Activated naive CD4-positive, alpha-beta T cell treated with anti-CD3 and anti-CD28 coated beads, Interleukin-2, amount 10 ng/mL, durations not matched to agents 7 days and 5 days (primary cell): ENCODE measurements at regions of chr1 and their contacts with region 1.

Region 1: DNA sequence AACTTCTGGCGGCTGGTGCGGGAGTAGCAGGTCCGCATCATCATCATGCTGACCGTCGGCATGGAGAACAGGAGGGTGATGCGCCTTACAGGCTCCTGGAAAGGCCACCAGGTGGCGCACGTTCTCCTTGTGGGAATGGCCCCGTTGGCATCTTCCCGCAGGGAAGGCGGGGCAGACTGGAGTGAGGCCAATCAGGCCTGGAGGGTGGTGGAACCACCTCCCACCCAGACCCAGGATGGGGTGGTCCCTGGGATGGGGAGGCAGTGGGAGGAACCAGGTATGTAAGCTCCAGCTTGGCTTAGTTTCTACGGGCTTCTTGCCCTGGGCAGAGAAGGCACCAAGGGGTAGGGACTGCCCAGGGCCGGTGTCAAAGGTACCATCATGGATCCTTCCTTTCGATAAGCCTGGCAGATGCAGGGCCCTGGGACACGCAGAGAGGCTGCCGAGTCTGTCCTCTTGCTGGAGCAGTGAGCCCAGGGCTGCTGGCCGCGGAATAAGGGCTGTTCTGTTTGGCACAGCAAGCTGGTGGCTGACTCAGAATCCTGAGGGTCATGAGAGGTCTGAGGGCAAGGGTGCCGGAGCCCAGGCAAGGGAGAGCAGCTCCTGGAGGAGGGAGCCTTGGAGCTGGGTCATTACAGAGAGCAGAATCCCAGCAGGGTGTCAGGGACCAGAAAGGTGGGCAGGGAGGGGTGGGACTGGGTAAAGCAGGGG is 8.7 kb upstream of the LGR6 start:
- DNase-seq: peak; percentile 79
- H3K4me3 Mint-ChIP-seq: no peak overlapping the region
- H3K27ac Mint-ChIP-seq: no peak overlapping the region
- H3K4me1 Mint-ChIP-seq: peaks cover 10% of the 10 kb centered on the region
- H3K27me3 Mint-ChIP-seq: peaks cover 79% of the 10 kb centered on the region

Region 2: GRCh38 chr1:201999625-202000238 is 185.2 kb before region 1 on chr1:
- CTCF ChIA-PET with region 1: no interaction called
- DNase-seq: peak; percentile 48
- H3K4me3 Mint-ChIP-seq: no peak overlapping the region
- H3K27ac Mint-ChIP-seq: no peak overlapping the region
- H3K4me1 Mint-ChIP-seq: no peaks in the 10 kb centered on the region
- H3K27me3 Mint-ChIP-seq: no peaks in the 10 kb centered on the region

Region 3: DNA sequence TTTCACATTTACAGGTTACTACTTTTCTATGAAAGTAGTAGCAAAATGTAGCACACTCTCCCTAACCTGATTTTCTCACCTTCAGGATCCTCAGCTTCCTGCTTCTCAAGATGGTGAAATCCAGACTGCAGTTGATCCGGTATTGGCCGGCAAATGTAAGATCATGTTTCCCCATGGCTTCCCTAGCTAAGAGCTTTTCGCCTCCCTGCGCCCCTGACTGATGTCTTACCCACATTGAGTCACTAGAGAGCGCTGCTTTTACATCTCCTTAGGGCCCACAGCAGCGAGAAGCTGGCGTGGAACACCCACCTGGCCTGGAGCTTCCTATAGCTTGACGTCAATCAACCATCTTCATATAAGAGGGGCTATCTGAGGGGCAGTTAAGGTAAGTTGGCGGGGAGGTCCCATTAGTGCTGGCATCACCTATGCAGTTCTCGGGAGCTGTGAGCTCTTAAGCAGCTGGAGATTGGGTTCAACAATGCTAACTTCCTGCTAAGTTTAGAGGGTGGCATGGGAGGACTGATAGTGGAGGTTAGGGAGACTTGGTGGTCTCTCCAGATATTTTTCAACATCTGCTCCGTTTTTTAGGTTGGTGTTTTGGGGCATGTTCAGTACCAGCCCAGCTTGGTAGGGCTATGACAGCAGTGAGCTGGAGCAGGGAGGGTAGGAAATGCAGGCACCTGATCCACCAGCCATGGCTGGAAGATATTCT is 30.0 kb before region 1 on chr1:
- CTCF ChIA-PET with region 1: interaction called, 34 read pairs
- DNase-seq: peak; percentile 70
- H3K4me3 Mint-ChIP-seq: no peak overlapping the region
- H3K27ac Mint-ChIP-seq: peak overlapping the region; percentile 62
- H3K4me1 Mint-ChIP-seq: peaks cover 47% of the 10 kb centered on the region
- H3K27me3 Mint-ChIP-seq: no peaks in the 10 kb centered on the region

Region 4: DNA sequence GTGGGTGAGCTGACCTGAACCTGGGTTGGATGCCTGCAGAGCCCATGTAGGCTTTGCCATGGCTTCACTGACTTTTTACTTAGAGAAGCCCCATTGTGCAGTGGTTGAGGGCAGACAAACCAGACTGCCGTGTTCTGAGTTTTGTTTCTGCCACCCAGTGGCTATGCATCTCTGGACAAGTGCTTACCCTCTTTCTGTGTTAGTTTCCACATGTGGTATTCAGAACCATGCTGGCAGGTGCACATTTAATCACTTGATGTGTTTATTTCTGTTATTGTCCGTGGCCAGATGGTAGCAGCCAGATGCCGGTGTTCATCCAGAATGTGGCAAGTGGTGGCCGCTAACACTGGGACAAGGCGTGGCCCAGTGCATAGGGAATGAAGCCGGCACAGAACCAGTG is 14.2 kb before region 1 on chr1:
- CTCF ChIA-PET with region 1: interaction called, 13 read pairs
- DNase-seq: no peak
- H3K4me3 Mint-ChIP-seq: no peak overlapping the region
- H3K27ac Mint-ChIP-seq: no peak overlapping the region
- H3K4me1 Mint-ChIP-seq: peaks cover 15% of the 10 kb centered on the region
- H3K27me3 Mint-ChIP-seq: peaks cover 22% of the 10 kb centered on the region